ENCODE measurements at regions of chr5 and their contacts with region 1.

Region 1: DNA sequence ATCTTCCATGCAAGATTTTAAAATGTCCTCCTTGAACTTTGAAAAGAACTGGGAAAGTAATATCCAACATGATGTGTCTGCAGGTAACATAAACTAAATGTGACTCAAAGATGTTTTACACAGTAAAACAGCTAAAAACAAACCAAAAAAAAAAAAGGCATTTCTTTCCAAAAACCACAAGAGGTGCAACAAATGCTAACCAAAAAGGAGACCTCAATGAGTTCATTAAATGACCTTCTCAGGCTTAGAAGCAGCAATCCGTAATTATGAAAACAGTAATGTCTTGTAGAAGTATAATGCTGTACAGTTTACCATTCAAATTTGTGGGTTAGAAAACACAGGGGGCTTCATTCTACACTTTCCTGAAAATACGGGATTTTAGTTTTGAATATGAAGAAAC is 2.5 kb downstream of the RNF145 start:
- DNase-seq: no peak
- H3K4me3 ChIP-seq: peak overlapping the region; percentile 64
- H3K27me3 ChIP-seq: no peaks in the 10 kb centered on the region
- CTCF ChIP-seq: no peak

Region 2: DNA sequence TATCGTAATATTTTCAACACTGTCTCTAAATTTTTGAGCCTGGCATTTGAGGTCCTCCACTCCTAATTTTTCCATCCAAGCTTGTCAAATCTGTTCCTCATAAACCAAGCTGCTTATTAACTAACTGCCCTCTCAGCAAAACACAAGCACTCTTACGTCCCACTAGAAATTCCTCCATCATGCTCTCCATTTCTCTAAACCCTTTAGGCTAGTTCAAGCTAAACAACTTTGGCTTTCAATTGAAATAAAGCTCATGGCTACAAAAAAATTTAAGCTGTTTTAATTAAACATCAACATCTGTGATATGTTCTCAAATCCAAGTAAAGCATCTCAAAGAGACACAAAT is 43.1 kb before region 1 on chr5:
- CTCF ChIA-PET with region 1: interaction called, 4 read pairs
- POLR2A ChIA-PET with region 1: interaction called, 10 read pairs
- DNase-seq: no peak
- H3K4me3 ChIP-seq: no peak overlapping the region
- H3K27me3 ChIP-seq: no peaks in the 10 kb centered on the region
- CTCF ChIP-seq: no peak

Region 3: GRCh38 chr5:159218595-159219023 is 11.8 kb after region 1 on chr5:
- CTCF ChIA-PET with region 1: no interaction called
- POLR2A ChIA-PET with region 1: no interaction called
- DNase-seq: no peak
- H3K4me3 ChIP-seq: no peak overlapping the region
- H3K27me3 ChIP-seq: no peaks in the 10 kb centered on the region
- CTCF ChIP-seq: no peak

Region 4: GRCh38 chr5:159741829-159742228 is 535.0 kb after region 1 on chr5:
- CTCF ChIA-PET with region 1: no interaction called
- POLR2A ChIA-PET with region 1: no interaction called
- DNase-seq: no peak
- H3K4me3 ChIP-seq: no peak overlapping the region
- H3K27me3 ChIP-seq: peaks cover 2% of the 10 kb centered on the region; the same call in 1 of the 2 replicates
- CTCF ChIP-seq: no peak